Caco-2 (cell line): ENCODE measurements at regions of chr6 and their contacts with region 1.

Region 1: DNA sequence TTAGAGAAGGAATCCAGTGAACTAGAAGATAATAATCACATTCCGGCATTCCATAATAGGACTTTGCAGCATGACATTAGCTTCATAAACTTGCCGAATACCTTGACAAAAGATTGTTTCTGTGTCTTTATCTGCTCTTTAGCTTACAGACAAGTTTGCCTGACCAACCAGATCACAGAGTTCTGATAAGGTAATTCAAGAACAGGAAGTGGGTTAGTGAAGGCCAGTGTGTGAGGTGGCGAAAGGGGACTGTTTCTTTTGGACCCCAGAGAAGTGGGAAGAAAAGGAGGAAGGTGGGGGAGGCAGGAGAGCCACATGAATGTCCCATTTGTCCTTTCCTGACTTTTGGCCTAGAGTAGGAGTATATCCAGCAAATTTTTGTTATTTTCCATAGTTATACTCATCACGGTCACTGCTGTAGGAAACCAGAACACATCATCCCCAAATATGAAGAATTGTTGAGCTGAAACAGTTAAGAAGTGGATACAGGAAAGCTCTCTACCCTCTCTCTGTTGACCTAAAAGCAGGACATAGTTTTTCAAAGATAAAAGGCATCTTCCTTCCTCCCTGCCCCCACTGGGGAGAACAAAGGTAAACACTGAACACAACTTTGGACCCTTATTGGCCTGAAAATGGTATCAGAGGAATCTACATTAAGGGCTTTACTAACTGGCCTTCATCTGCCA is 72.4 kb upstream of the TNFAIP3 start:
- DNase-seq: peak; percentile 63 to 70
- H3K4me3 ChIP-seq: no peak overlapping the region
- H3K4me3 Mint-ChIP-seq: peak overlapping the region; percentile 53
- H3K27ac Mint-ChIP-seq: peak overlapping the region; percentile 87
- H3K4me1 ChIP-seq: peaks cover 69% of the 10 kb centered on the region
- H3K4me1 Mint-ChIP-seq: peaks cover 45% of the 10 kb centered on the region
- H3K27me3 ChIP-seq: no peaks in the 10 kb centered on the region
- H3K27me3 Mint-ChIP-seq: no peaks in the 10 kb centered on the region
- CTCF ChIP-seq: no peak

Region 2: GRCh38 chr6:137722749-137723272 is 71.8 kb before region 1 on chr6:
- CTCF ChIA-PET with region 1: no interaction called
- POLR2A ChIA-PET with region 1: interaction called, 11 read pairs
- intact Hi-C with region 1: loop called (anchors 2 kb)
- DNase-seq: no peak
- H3K4me3 ChIP-seq: no peak overlapping the region
- H3K4me3 Mint-ChIP-seq: peak overlapping the region; percentile 36
- H3K27ac Mint-ChIP-seq: peak overlapping the region; percentile 86
- H3K4me1 ChIP-seq: peaks cover 41% of the 10 kb centered on the region
- H3K4me1 Mint-ChIP-seq: peaks cover 32% of the 10 kb centered on the region
- H3K27me3 ChIP-seq: no peaks in the 10 kb centered on the region
- H3K27me3 Mint-ChIP-seq: no peaks in the 10 kb centered on the region
- CTCF ChIP-seq: no peak

Region 3: DNA sequence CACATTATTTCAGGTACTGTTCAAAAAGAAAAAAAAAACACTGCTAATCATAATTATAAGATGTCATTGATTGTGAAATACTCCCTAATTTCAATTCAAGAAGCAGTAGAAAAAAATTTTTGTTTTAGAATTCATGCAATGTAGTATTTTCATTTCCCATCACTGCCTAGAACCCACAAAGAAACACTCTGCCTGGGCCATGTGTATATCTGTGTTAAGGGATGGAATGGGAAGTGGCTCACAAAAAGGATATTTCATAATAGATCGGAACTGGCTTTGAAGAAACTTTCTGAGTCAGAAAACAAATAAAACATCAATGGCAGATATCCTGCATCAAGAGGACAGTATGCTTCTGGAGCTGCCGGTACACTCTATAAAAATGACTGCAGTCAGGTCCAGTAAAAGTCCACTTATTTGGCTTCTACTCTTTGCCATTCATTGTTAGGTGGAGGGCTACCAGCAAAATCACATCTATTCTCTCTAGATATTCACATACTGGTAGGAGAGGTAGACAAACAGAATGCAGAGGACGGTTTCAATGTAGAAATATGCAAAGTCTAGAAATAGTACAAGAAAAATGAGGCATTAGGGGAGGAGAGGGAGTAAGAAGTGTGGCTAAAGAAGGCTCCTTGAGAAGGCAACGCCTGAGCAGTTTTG is 62.6 kb before region 1 on chr6:
- CTCF ChIA-PET with region 1: interaction called, 3 read pairs
- POLR2A ChIA-PET with region 1: no interaction called
- intact Hi-C with region 1: loop called (anchors 2 kb)
- DNase-seq: peak in 1 of 2 experiments; percentile 51
- H3K4me3 ChIP-seq: no peak overlapping the region
- H3K4me3 Mint-ChIP-seq: peak overlapping the region; percentile 1
- H3K27ac Mint-ChIP-seq: peak overlapping the region; percentile 22
- H3K4me1 ChIP-seq: peaks cover 49% of the 10 kb centered on the region
- H3K4me1 Mint-ChIP-seq: peaks cover 45% of the 10 kb centered on the region
- H3K27me3 ChIP-seq: no peaks in the 10 kb centered on the region
- H3K27me3 Mint-ChIP-seq: no peaks in the 10 kb centered on the region
- CTCF ChIP-seq: no peak

Region 4: GRCh38 chr6:137754366-137754765 is 40.3 kb before region 1 on chr6:
- CTCF ChIA-PET with region 1: no interaction called
- POLR2A ChIA-PET with region 1: no interaction called
- intact Hi-C with region 1: no loop called
- DNase-seq: no peak
- H3K4me3 ChIP-seq: no peak overlapping the region
- H3K4me3 Mint-ChIP-seq: no peak overlapping the region
- H3K27ac Mint-ChIP-seq: no peak overlapping the region
- H3K4me1 ChIP-seq: no peaks in the 10 kb centered on the region
- H3K4me1 Mint-ChIP-seq: peaks cover 15% of the 10 kb centered on the region
- H3K27me3 ChIP-seq: no peaks in the 10 kb centered on the region
- H3K27me3 Mint-ChIP-seq: no peaks in the 10 kb centered on the region
- CTCF ChIP-seq: no peak

Region 5: DNA sequence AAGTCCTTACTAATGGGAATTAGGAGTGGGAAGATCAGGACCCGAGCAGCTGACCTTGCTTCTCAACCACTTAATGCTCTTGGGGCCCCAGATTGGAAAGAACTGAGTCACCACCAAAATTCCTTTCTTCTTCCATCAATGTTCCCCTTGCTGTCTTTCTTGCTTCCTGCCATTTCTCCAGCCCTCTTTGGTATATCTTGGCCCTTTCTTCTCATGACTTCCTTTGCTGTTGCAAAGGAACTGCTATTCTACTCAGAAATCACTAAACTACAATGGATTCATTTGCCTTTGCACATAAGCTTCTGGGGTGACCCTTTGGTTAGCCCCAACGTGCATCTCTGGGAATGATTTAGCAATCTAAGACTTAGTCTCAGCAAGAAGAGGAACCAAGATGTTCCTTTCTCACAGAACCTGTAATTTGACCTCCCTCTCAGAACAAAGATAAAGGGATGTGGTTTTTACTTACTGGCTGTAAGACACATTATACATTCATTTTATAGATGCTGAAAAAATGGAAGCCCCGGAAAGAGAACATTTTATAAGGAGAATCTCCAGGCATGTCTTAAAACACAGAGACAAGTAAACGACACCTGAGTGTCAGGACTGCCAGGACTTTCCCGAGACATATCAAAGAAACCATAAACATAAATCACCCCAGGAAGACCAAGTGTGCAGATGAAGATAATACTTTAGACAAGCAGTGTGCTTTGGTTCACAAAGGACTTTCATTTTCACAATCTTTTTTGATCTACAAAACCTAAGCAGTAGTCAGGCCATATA is 26.6 kb before region 1 on chr6:
- CTCF ChIA-PET with region 1: no interaction called
- POLR2A ChIA-PET with region 1: no interaction called
- intact Hi-C with region 1: loop called (anchors 2 kb)
- DNase-seq: no peak
- H3K4me3 ChIP-seq: no peak overlapping the region
- H3K4me3 Mint-ChIP-seq: no peak overlapping the region
- H3K27ac Mint-ChIP-seq: no peak overlapping the region
- H3K4me1 ChIP-seq: peaks cover 15% of the 10 kb centered on the region
- H3K4me1 Mint-ChIP-seq: peaks cover 12% of the 10 kb centered on the region
- H3K27me3 ChIP-seq: no peaks in the 10 kb centered on the region
- H3K27me3 Mint-ChIP-seq: no peaks in the 10 kb centered on the region
- CTCF ChIP-seq: no peak